ENCODE measurements at regions of chr11 and their contacts with region 1.

Region 1: GRCh38 chr11:830295-831117 is 2.2 kb upstream of the CD151 start:
- DNase-seq: peak; percentile 84
- H3K4me3 ChIP-seq: peak overlapping the region in 2 of 4 donors; percentile 33 to 43
- H3K27ac ChIP-seq: peak overlapping the region; percentile 16 to 95 (median 92)
- H3K4me1 ChIP-seq: peaks cover 47 to 89% (median 81%) of the 10 kb centered on the region in 4 donors
- H3K27me3 ChIP-seq: peaks cover 65% of the 10 kb centered on the region
- CTCF ChIP-seq: no peak
- EP300 ChIP-seq: no peak
- POLR2A ChIP-seq: no peak

Region 2: GRCh38 chr11:859509-860131 is 29.1 kb after region 1 on chr11:
- in situ Hi-C with region 1: no loop called
- intact Hi-C with region 1: loop called (anchors 1 kb)
- DNase-seq: peak; percentile 76
- H3K4me3 ChIP-seq: no peak overlapping the region
- H3K27ac ChIP-seq: peak overlapping the region in 3 of 4 donors; percentile 15 to 46 (median 42)
- H3K4me1 ChIP-seq: peaks cover 13 to 22% (median 15%) of the 10 kb centered on the region in 4 donors
- H3K27me3 ChIP-seq: peaks cover 36% of the 10 kb centered on the region
- CTCF ChIP-seq: no peak
- EP300 ChIP-seq: no peak
- POLR2A ChIP-seq: no peak

Region 3: DNA sequence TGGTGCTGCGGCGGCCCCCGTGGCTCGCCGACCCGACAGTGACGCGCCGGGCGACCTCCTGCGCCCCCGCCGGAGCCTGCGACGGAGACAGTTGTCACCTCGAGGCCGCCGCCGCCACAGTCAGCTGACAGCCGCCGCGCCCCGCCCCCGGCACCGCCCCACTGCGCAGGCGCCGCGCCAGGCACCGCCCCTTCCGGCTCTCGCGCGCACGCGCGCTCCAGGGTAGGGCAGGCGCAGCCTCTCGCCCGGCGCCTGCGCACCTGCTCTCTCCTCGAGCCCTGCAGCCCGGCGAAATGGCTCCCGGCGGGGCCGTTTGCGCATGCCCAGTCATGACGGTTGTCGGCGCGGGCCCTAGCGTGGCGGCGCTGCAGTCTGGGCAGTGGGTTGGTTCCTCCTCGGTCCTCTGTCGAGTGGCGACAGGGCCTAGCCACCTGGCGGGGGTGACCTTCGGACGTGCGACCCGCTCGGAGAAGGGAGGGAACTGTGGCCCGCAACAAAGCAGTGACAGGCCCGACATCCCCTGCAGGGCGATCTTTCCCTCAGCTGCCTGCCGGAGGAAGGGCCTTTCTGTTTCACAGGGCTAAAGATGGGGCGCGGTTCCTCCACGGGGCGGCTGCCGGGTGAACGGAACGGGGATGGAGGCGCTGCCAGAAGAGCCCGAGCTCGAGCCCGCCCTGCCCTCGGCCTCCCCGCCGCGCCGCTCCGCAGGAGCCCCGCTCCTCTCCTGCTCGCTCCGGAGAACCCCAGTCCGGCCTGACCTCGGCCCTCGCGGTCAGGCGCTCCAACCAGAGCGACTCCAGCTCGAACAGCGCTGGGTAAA is 479.2 kb after region 1 on chr11 and contains the start of gene TOLLIP:
- in situ Hi-C with region 1: no loop called
- intact Hi-C with region 1: no loop called
- DNase-seq: peak; percentile 97
- H3K4me3 ChIP-seq: peak within 1 kb of the TSS; percentile 63 to 94 (median 88)
- H3K27ac ChIP-seq: peak within 1 kb of the TSS; percentile 93 to 96 (median 94)
- H3K4me1 ChIP-seq: peaks cover 15 to 53% (median 46%) of the 10 kb centered on the region in 4 donors
- H3K27me3 ChIP-seq: no peaks in the 10 kb centered on the region
- CTCF ChIP-seq: peak in 2 of 5 experiments; percentile 4 to 33
- EP300 ChIP-seq: no peak
- POLR2A ChIP-seq: peak; percentile 73
- total RNA-seq, gene TOLLIP: 25.9 to 132 (median 50.4) TPM